H1 (cell line): ENCODE measurements at regions of chr10 and their contacts with region 1.

Region 1: DNA sequence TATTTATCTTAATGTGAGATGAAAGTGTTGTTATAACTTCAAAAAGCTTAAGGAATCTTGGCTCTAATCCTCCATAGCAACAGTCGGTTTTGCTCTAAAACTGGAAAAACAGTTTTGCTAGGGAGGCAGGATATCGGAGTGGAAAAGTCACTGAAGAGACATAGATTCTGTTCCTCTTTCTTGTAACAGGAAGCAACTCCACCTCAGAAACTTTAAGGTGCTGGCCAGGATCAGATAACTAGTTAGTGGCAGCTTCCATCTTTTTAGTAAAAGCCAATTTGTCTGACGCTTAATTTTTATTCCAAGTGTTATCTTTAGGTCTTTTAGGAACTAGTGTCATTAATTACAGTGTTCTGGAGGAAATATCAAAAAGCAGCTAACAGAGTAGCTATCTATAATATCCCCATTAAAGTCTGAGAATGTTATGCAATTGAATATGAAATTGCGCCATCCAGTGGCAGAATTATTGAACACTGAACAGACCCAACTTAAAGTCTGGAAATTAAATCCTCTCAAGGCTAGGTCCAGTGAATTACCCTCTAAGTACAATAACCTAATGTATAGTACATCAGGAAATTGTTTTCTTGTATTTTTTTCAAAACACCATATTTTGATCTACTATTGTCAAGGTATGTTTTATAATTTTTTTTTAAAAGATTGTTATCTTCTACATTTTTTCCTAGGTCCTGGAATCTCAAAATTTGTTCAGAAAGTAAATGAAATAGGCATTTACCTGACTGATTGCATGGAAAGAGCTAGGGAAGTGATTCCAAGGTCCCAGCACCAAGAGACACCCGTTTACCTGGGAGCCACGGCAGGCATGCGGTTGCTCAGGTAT is 65.9 kb upstream of the CC2D2B start:
- DNase-seq: peak in 1 of 2 experiments; percentile 15
- H3K4me3 ChIP-seq: no peak overlapping the region
- H3K27ac ChIP-seq: no peak overlapping the region
- H3K4me1 ChIP-seq: peaks cover 0 to 4% (median 2%) of the 10 kb centered on the region in 4 experiments; a peak in 2 of 7 replicates
- H3K27me3 ChIP-seq: no peaks in the 10 kb centered on the region
- CTCF ChIP-seq: peak in 2 of 3 experiments; percentile 54 to 58; a peak in 2 of 4 replicates
- EP300 ChIP-seq: no peak
- POLR2A ChIP-seq: no peak
- RAD21 ChIP-seq: peak; percentile 77 to 78

Region 2: DNA sequence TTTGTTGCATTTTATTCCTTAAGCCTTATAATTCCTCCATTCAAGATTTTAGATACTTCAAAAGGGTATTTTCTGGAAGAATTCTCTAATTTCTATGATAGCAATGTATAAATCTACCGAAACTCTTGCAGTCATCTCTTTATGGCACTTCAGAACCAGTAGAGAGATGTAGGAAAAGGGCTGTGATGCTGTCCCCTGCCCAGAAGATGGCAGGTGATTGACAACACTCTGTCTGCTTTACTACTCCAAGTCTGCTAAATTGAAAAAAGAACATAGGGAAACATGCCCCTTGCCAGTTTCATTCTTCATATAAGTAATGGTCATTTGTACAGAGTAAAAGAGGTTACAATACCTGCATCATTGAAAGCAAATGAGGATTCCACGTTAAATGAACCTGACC is 153.2 kb before region 1 on chr10:
- CTCF ChIA-PET with region 1: interaction called, 238 read pairs
- POLR2A ChIA-PET with region 1: interaction called, 6 read pairs
- DNase-seq: no peak
- H3K4me3 ChIP-seq: no peak overlapping the region
- H3K27ac ChIP-seq: no peak overlapping the region
- H3K4me1 ChIP-seq: peaks cover 0 to 3% (median 1%) of the 10 kb centered on the region in 4 experiments; a peak in 2 of 7 replicates
- H3K27me3 ChIP-seq: no peaks in the 10 kb centered on the region
- CTCF ChIP-seq: no peak
- EP300 ChIP-seq: no peak
- POLR2A ChIP-seq: no peak
- RAD21 ChIP-seq: peak in 1 of 2 experiments; percentile 15; a peak in 1 of 4 replicates

Region 3: DNA sequence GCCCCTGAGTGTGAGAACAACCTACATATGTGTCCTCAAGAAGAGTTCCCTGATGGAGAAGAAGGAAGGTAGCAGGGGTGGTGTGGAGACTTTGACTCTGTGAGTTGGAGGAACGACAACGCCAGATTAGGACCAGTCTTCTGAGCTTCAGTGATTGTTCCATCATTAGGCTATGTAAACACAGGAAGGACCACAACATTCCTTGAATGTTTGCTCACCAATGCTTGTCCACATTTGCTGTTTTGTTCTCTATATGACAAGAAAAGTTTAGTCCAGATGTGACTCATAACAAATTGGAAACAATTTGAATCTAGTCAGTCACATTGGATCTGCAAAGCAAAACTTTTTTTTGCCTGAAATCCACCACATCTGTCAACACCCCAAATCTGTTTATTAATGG is 23.2 kb before region 1 on chr10:
- CTCF ChIA-PET with region 1: interaction called, 15 read pairs
- POLR2A ChIA-PET with region 1: interaction called, 3 read pairs
- DNase-seq: no peak
- H3K4me3 ChIP-seq: no peak overlapping the region
- H3K27ac ChIP-seq: no peak overlapping the region
- H3K4me1 ChIP-seq: no peaks in the 10 kb centered on the region
- H3K27me3 ChIP-seq: no peaks in the 10 kb centered on the region
- CTCF ChIP-seq: no peak
- EP300 ChIP-seq: no peak
- POLR2A ChIP-seq: no peak
- RAD21 ChIP-seq: no peak

Region 4: GRCh38 chr10:95831515-95831914 is 10.4 kb before region 1 on chr10:
- CTCF ChIA-PET with region 1: interaction called, 48 read pairs
- POLR2A ChIA-PET with region 1: interaction called, 3 read pairs
- DNase-seq: no peak
- H3K4me3 ChIP-seq: no peak overlapping the region
- H3K27ac ChIP-seq: no peak overlapping the region
- H3K4me1 ChIP-seq: no peaks in the 10 kb centered on the region
- H3K27me3 ChIP-seq: no peaks in the 10 kb centered on the region
- CTCF ChIP-seq: no peak
- EP300 ChIP-seq: no peak
- POLR2A ChIP-seq: no peak
- RAD21 ChIP-seq: no peak

Region 5: DNA sequence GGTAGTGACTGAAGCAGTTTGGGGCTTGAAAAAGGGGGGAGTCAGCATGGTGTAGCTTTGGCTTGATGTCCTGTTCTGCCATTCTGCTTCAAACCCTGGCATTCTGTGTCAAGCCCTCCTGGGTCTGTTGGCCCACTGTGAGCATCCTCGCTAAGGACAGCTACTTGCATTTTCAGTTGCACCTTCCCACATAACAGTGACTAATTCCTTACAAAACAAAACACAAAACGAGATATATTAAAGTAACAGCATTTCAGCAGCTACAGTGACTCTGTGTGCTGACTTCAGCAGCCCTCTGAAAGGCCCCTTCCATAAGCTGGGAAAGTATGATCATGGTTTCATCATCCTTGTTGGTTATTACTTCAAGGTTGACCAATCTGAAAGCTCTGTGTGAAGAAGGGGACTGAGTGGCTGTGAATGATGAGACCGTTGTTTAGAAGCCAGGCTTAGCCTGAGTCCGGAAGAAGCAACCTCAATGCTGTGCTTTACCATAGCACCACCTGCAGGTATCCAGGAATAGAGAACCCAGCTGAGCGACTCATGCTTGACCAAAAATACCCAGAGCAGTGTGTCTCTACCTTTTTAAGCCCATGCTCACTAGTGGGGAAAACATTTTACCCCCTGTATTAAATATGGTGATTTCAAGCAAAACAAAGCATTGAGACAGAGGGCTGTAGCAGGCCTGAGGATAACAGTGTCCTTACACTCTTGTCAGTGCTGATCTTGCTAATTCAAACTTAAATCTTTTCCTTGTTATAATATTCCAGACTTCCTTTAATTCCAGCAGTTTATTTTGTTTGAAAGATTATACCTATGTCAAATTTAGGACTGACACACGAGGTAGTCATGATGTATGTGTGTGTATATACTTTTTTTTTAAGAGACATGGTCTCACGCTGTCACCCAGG is 23.3 kb after region 1 on chr10:
- CTCF ChIA-PET with region 1: interaction called, 34 read pairs
- POLR2A ChIA-PET with region 1: no interaction called
- DNase-seq: no peak
- H3K4me3 ChIP-seq: no peak overlapping the region
- H3K27ac ChIP-seq: no peak overlapping the region
- H3K4me1 ChIP-seq: no peaks in the 10 kb centered on the region
- H3K27me3 ChIP-seq: no peaks in the 10 kb centered on the region
- CTCF ChIP-seq: peak; percentile 47 to 87 (median 75)
- EP300 ChIP-seq: no peak
- POLR2A ChIP-seq: no peak
- RAD21 ChIP-seq: peak; percentile 90 to 91

Region 6: GRCh38 chr10:95935429-95935828 is 93.5 kb after region 1 on chr10:
- CTCF ChIA-PET with region 1: no interaction called
- POLR2A ChIA-PET with region 1: no interaction called
- DNase-seq: no peak
- H3K4me3 ChIP-seq: no peak overlapping the region
- H3K27ac ChIP-seq: no peak overlapping the region
- H3K4me1 ChIP-seq: no peaks in the 10 kb centered on the region
- H3K27me3 ChIP-seq: no peaks in the 10 kb centered on the region
- CTCF ChIP-seq: no peak
- EP300 ChIP-seq: no peak
- POLR2A ChIP-seq: no peak
- RAD21 ChIP-seq: no peak